Ascending aorta (tissue), 2 donors: ENCODE measurements at regions of chr19 and their contacts with region 1.

Region 1: GRCh38 chr19:7535035-7535992 is at the start of gene PNPLA6:
- DNase-seq: peak; percentile 82 to 97
- H3K4me3 ChIP-seq: peak within 1 kb of the TSS; percentile 82 to 89
- H3K27ac ChIP-seq: peak within 1 kb of the TSS; percentile 92 to 93
- H3K4me1 ChIP-seq: peaks cover 0 to 14% of the 10 kb centered on the region in 2 donors
- H3K27me3 ChIP-seq: no peaks in the 10 kb centered on the region
- CTCF ChIP-seq: no peak
- total RNA-seq, gene PNPLA6: 190 TPM

Region 2: GRCh38 chr19:7394731-7395359 is 140.5 kb before region 1 on chr19:
- intact Hi-C with region 1: loop called (anchors 1 kb)
- DNase-seq: peak; percentile 48 to 93
- H3K4me3 ChIP-seq: peak overlapping the region; percentile 77 to 89
- H3K27ac ChIP-seq: peak overlapping the region; percentile 42 to 73
- H3K4me1 ChIP-seq: peaks cover 0 to 14% of the 10 kb centered on the region in 2 donors
- H3K27me3 ChIP-seq: no peaks in the 10 kb centered on the region
- CTCF ChIP-seq: no peak

Region 3: DNA sequence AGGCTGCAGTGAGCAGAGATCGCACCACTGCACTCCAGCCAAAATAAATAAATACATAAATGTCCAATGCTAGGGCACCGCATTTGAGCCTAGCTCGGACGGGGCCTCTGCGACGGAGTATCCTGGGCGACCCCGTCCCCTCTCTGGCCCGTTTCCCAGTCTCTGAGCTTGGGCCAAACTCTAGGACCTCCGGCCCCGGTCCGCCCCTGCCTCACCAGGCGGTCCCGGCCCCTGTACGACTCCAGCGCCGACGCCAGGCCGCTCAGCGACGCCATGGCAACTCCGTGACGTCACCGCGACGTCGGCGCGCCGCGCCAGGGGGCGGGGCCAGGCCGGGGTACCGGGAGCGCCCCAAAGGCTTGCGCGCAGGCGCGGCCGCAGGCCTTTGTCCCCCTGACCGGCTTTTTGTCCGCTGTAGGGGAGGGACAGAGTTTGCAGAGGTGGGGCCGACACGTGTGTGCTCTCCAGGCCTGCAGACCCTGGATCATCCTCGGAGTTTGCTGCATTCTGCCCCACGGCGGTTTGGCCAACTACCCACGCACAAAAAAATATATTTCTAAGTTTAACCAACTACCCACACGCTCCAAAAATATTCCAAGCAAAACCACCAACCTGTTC is 46.5 kb before region 1 on chr19 and contains the start of gene PEX11G:
- intact Hi-C with region 1: loop called (anchors 1 kb)
- DNase-seq: peak; percentile 37 to 93
- H3K4me3 ChIP-seq: peak within 1 kb of the TSS; percentile 73 to 84
- H3K27ac ChIP-seq: peak within 1 kb of the TSS; percentile 70 to 84
- H3K4me1 ChIP-seq: peaks cover 0 to 4% of the 10 kb centered on the region in 2 donors
- H3K27me3 ChIP-seq: no peaks in the 10 kb centered on the region
- CTCF ChIP-seq: no peak
- total RNA-seq, gene PEX11G: not detected

Region 4: DNA sequence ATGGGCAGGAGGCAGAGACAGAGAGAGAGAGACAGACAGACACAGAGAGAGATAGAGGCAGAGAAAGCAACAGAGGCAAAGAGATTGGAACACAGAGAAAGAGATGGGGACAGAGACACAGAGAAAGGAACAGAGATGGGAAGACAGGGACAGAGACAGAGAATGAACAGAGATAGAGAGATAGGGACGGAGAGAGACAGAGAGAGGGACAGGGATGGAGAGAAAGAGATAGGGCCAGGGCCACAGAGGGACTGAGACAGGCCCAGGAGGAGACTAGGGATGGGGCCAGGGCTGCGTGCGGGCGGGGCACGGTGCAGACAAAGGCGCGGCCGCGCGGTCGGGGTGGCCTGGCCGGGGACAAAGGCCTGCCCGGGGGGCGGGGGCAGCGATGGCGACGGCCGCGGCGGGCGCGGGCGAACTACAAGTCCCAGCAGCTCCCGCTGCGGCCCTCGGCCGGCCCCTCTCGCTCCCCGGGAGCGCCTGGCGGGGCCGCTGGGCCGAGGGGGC is 19.6 kb before region 1 on chr19 and contains the start of gene ZNF358:
- intact Hi-C with region 1: loop called (anchors 1 kb)
- DNase-seq: peak in 1 of 2 donors; percentile 88
- H3K4me3 ChIP-seq: peak within 1 kb of the TSS; percentile 70 to 97
- H3K27ac ChIP-seq: peak within 1 kb of the TSS; percentile 90 to 96
- H3K4me1 ChIP-seq: peaks cover 6 to 23% of the 10 kb centered on the region in 2 donors
- H3K27me3 ChIP-seq: no peaks in the 10 kb centered on the region
- CTCF ChIP-seq: no peak
- total RNA-seq, gene ZNF358: 163 TPM

Region 5: GRCh38 chr19:7522072-7522922 is 13.0 kb before region 1 on chr19 and contains the start of gene MCOLN1:
- intact Hi-C with region 1: loop called (anchors 1 kb)
- DNase-seq: peak; percentile 97 to 100
- H3K4me3 ChIP-seq: peak within 1 kb of the TSS; percentile 83 to 87
- H3K27ac ChIP-seq: peak within 1 kb of the TSS; percentile 14 to 64
- H3K4me1 ChIP-seq: peaks cover 8 to 32% of the 10 kb centered on the region in 2 donors
- H3K27me3 ChIP-seq: no peaks in the 10 kb centered on the region
- CTCF ChIP-seq: no peak
- total RNA-seq, gene MCOLN1: 11.9 TPM

Region 6: DNA sequence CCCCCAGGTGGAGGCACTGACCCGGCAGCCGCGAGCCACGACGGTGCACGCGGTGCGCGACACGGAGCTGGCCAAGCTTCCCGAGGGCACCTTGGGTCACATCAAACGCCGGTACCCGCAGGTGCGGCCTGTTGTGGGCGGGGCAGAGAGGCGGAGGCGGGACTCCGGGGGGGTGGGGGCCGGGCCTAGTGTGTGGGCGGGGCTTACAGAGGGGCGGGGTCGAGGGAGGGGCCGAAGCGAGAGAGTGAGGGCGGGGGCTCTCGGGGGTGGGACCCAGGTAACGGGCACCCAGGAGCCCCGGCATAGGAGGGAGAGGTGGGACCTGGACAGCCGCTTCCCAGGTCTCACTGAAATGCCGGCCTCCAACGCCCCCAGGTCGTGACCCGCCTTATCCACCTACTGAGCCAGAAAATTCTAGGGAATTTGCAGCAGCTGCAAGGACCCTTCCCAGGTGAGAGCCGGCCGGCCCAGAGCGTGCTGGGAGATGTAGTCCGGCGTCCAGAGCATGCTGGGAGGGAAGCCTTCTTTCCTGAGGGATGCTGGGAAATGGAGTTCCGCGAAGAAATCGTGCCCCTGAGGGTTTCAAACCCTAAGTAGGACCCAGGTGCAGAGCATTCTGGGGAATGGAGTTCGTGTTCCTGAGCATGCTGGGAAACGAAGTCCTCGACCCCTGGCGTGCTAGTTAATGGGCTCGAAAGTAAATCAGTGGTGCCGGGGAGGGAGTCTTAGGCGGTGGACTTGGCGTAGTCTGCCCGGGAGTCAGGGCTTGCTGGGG is 15.9 kb after region 1 on chr19:
- intact Hi-C with region 1: loop called (anchors 1 kb)
- DNase-seq: peak in 1 of 2 donors; percentile 77
- H3K4me3 ChIP-seq: peak overlapping the region in 1 of 2 donors; percentile 14
- H3K27ac ChIP-seq: no peak overlapping the region
- H3K4me1 ChIP-seq: no peaks in the 10 kb centered on the region
- H3K27me3 ChIP-seq: no peaks in the 10 kb centered on the region
- CTCF ChIP-seq: no peak

Region 7: GRCh38 chr19:7629347-7630054 is 94.2 kb after region 1 on chr19 and contains the starts of genes PET100 and XAB2:
- intact Hi-C with region 1: loop called (anchors 5 kb)
- DNase-seq: peak; percentile 95 to 99
- H3K4me3 ChIP-seq: peak within 1 kb of the TSS; percentile 94 to 96
- H3K27ac ChIP-seq: peak within 1 kb of the TSS; percentile 79 to 88
- H3K4me1 ChIP-seq: peaks cover 7 to 27% of the 10 kb centered on the region in 2 donors
- H3K27me3 ChIP-seq: no peaks in the 10 kb centered on the region
- CTCF ChIP-seq: no peak
- total RNA-seq, gene PET100: not detected
- total RNA-seq, gene XAB2: 18.4 TPM